Activated CD4-positive, alpha-beta T cell treated with anti-CD3 and anti-CD28 coated beads, Interleukin-2, amount 10 ng/mL, durations not matched to agents 24 days and 14 days (primary cell): ENCODE measurements at regions of chr16 and their contacts with region 1.

Region 1: DNA sequence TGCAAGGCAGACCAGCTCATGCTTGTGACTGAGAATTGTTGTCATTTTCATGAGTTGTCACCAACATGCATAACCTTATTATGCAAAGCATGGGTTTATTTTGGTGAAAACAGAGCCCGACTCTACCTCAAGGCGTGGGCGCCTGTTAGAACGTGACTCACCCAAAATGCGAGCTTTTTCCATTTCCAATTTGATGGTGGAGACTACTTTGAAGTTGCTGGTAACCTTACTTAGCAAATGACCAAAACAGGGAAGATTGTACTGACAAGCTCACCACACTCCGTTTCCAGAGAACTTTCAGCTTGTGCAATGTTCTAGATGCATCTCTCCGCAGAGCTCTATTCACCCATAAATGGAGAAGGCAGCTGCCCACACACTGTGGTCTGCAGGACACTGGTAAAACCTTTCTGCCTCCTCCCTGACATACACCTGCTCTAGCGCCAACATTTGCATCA is 284.5 kb downstream of the MAF start:
- DNase-seq: peak; percentile 84
- H3K4me3 Mint-ChIP-seq: peak overlapping the region; percentile 68
- H3K27ac Mint-ChIP-seq: peak overlapping the region; percentile 87
- H3K4me1 Mint-ChIP-seq: peaks cover 31% of the 10 kb centered on the region
- H3K27me3 Mint-ChIP-seq: peaks cover 25% of the 10 kb centered on the region

Region 2: DNA sequence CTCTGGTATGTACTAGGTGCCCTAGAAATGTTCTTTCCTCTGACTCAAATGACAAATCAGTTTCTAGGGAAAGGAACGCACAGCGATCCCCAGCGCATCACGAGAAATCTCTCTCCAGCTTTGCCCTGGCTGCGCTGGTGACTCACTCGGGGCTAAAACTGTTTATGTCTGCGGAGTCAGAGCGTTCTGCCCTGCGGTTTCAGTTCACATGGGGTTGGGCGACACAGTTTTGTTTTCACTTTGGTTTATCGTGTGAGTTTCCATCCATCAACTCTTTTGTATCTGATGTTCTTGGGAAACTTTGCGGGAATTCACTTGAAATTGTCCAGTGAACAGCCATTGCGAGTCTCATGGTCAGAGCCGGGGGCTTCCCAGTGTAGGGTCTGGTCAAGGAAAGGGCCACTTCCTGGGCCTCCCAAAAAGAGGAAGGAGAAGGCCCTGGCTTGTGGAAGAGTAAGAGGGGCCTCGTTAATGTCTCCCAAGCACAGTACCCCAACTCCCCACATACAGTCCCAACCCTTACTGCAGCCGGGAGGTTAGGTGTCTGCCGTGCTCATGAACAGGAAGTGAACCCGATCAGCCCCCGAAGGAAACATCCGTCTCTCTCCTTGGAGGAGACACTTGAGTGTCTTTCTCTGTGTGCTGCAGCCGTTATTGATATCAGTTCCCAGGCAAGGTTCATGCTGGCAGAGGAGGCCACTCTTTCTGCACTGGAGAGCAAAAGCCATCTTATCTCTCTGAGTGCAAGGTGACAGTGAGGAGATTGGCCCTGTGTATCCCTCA is 573.3 kb before region 1 on chr16:
- intact Hi-C with region 1: loop called (anchors 1 kb)
- DNase-seq: peak; percentile 91
- H3K4me3 Mint-ChIP-seq: peak overlapping the region; percentile 66
- H3K27ac Mint-ChIP-seq: peak overlapping the region; percentile 87
- H3K4me1 Mint-ChIP-seq: peaks cover 18% of the 10 kb centered on the region
- H3K27me3 Mint-ChIP-seq: no peaks in the 10 kb centered on the region

Region 3: DNA sequence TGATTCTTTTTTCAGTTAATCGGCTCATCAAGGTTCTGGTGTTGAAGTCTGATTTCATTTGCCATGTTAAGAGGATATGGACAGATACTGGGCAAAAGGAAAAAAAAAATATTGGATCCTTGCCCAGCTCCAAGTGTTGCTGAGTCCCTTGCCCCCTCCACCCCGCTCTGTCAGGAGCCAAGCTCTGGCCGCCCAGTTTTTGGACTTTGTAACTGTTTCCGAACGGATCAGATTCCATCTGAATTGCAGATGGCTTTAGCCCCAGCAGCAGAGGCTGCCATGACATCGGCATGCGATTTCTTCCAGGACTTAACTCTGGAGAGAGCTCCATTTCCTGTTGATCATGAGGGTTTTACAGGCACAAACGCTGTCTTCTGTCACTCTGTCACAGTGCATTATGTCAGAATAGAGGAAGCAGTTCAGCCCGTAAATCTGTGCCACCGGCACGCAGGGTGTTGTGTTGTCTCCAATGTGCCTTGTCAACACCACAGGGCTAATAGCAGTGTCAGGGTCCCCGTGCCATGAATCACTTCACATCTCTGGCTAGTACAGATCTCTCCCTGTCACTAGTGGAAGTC is 331.1 kb before region 1 on chr16:
- intact Hi-C with region 1: no loop called
- DNase-seq: no peak
- H3K4me3 Mint-ChIP-seq: no peak overlapping the region
- H3K27ac Mint-ChIP-seq: no peak overlapping the region
- H3K4me1 Mint-ChIP-seq: no peaks in the 10 kb centered on the region
- H3K27me3 Mint-ChIP-seq: no peaks in the 10 kb centered on the region

Region 4: GRCh38 chr16:79089735-79090284 is 226.2 kb before region 1 on chr16:
- intact Hi-C with region 1: loop called (anchors 1 kb)
- DNase-seq: peak; percentile 91
- H3K4me3 Mint-ChIP-seq: peak overlapping the region; percentile 75
- H3K27ac Mint-ChIP-seq: peak overlapping the region; percentile 94
- H3K4me1 Mint-ChIP-seq: peaks cover 49% of the 10 kb centered on the region
- H3K27me3 Mint-ChIP-seq: peaks cover 5% of the 10 kb centered on the region

Region 5: GRCh38 chr16:79217375-79218011 is 98.5 kb before region 1 on chr16:
- intact Hi-C with region 1: loop called (anchors 1 kb)
- DNase-seq: peak; percentile 80
- H3K4me3 Mint-ChIP-seq: peak overlapping the region; percentile 4
- H3K27ac Mint-ChIP-seq: peak overlapping the region; percentile 50
- H3K4me1 Mint-ChIP-seq: peaks cover 22% of the 10 kb centered on the region
- H3K27me3 Mint-ChIP-seq: peaks cover 7% of the 10 kb centered on the region

Region 6: GRCh38 chr16:79286646-79287423 is 29.2 kb before region 1 on chr16:
- intact Hi-C with region 1: loop called (anchors 1 kb)
- DNase-seq: peak; percentile 78
- H3K4me3 Mint-ChIP-seq: peak overlapping the region; percentile 35
- H3K27ac Mint-ChIP-seq: peak overlapping the region; percentile 56
- H3K4me1 Mint-ChIP-seq: peaks cover 50% of the 10 kb centered on the region
- H3K27me3 Mint-ChIP-seq: peaks cover 4% of the 10 kb centered on the region

Region 7: DNA sequence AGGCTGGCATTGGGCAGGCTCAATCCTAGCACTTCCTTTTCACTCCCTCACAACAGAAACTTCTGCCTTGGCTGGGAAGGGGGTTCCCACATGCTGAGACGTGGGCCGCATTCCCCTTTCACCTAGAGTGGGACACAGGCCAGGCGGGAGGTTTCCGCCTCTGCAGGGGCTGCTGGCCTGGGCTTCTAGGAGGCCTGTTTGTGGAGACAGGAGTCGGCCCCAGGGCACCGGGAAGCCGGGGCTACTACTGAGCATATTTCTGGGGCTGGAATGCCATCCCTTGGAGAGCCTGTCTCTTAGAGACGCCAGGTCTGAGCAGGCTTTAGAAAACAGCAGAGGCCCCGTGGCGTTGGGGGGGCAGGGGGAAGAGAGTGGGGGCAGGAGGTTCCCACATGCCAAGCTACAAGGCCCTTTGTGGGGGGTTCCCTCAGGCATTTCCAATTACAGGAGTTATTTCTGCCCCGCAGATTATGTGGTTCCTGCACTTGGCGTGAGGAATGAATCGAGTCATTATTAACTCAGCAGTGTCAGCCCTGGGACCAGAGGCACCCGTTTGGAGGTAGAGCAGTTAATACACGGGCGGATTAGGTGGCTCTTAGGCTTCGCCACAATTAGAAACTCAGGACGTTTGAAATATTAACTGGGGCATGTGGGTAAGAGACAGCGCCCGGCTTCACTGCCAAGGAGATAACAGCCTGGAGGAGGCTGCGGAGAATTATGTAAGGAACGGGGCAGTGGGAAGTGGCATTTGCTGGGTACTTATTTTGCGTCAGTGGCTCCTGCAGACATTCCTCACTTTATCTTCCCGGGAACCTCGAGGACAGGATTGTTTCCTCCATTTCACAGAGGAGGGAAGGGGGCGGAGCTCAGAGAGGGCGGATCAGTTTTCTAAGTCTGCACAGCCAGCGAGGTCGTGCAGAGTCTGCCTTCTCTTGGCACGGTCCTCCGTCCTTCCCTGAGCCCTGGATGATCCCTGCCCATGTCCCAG is 122.0 kb after region 1 on chr16:
- intact Hi-C with region 1: no loop called
- DNase-seq: no peak
- H3K4me3 Mint-ChIP-seq: no peak overlapping the region
- H3K27ac Mint-ChIP-seq: no peak overlapping the region
- H3K4me1 Mint-ChIP-seq: no peaks in the 10 kb centered on the region
- H3K27me3 Mint-ChIP-seq: peaks cover 4% of the 10 kb centered on the region

Region 8: DNA sequence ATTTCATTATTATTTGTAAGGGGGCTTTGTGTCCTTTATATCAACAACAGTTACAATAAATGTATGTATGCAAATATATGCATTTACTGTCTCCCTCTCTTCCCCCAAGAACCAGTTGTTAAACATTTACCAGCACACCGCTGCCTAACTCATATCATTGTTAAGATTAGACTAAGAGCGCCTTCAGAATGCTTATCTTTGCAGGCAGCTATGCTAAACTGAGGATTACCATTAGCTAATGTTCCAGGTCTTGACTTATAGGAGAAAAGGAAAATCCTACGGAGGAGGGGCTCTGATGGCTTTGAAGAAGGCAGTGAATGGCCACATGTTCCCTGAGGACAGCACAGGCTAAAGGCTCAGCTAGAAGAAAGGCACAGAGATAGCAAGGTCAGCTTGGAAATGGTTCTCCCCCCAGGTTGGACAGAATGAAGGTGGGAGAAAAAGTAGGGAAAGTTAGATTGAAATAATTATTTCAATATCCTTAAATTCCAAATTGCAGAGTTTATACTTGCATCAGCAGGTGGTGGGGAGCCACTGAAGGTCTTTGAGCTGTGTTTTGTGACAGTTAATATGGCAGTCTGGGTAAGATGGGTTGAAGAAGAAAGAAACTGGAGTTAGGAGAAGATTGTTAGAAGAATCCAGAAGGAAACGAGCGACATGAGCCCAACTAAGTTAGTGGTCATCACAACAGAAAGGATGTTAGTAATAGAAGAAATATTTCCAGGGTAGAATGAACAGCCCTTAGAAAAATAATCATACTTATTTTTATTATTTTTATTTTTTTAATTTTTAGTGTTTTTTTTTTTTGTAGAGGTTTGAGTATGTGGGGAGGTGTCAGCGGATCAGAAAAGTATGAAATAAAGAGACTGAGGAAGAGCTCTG is 371.5 kb after region 1 on chr16:
- intact Hi-C with region 1: no loop called
- DNase-seq: no peak
- H3K4me3 Mint-ChIP-seq: no peak overlapping the region
- H3K27ac Mint-ChIP-seq: no peak overlapping the region
- H3K4me1 Mint-ChIP-seq: no peaks in the 10 kb centered on the region
- H3K27me3 Mint-ChIP-seq: peaks cover 7% of the 10 kb centered on the region